H1 (cell line): ENCODE measurements at regions of chr12 and their contacts with region 1.

Region 1: GRCh38 chr12:6752921-6753771 is at the start of gene MLF2:
- DNase-seq: peak; percentile 96 to 100
- H3K4me3 ChIP-seq: peak within 1 kb of the TSS; percentile 72 to 91 (median 88)
- H3K27ac ChIP-seq: peak within 1 kb of the TSS; percentile 94
- H3K4me1 ChIP-seq: peaks cover 0 to 4% (median 3%) of the 10 kb centered on the region in 4 experiments; a peak in 5 of 7 replicates
- H3K27me3 ChIP-seq: no peaks in the 10 kb centered on the region
- CTCF ChIP-seq: peak in 1 of 3 experiments; percentile 85; a peak in 1 of 4 replicates
- EP300 ChIP-seq: no peak
- POLR2A ChIP-seq: peak; percentile 61 to 71
- RAD21 ChIP-seq: no peak
- total RNA-seq, gene MLF2: 229 and 232 TPM in 2 replicates

Region 2: DNA sequence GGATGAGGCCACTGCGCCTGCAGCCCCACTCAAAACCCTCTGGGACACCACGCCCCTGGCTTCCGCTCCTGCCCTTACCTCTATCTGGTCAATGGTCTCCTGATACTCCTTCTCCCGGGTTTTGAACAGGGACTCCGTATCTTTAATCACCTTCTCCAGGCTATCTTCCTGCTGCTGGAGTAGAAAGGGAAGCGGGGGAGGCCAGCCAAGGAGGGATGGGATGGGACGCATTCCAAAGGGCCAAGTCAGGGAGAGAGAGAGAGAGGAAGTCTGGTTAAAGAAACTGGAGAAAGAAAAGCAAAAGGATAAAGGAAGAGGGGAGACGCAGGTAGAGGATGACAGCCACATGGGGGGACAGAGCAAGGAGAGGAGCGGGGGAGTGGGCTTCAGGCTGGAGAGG is 205.2 kb before region 1 on chr12:
- CTCF ChIA-PET with region 1: no interaction called
- POLR2A ChIA-PET with region 1: no interaction called
- DNase-seq: no peak
- H3K4me3 ChIP-seq: no peak overlapping the region
- H3K27ac ChIP-seq: no peak overlapping the region
- H3K4me1 ChIP-seq: peaks cover 0 to 4% (median 3%) of the 10 kb centered on the region in 4 experiments; a peak in 4 of 7 replicates
- H3K27me3 ChIP-seq: no peaks in the 10 kb centered on the region
- CTCF ChIP-seq: no peak
- EP300 ChIP-seq: no peak
- POLR2A ChIP-seq: no peak
- RAD21 ChIP-seq: no peak

Region 3: GRCh38 chr12:6723607-6724396 is 29.3 kb before region 1 on chr12 and contains the start of gene COPS7A:
- CTCF ChIA-PET with region 1: interaction called, 13 read pairs
- POLR2A ChIA-PET with region 1: interaction called, 25 read pairs
- DNase-seq: peak; percentile 95 to 98
- H3K4me3 ChIP-seq: peak within 1 kb of the TSS; percentile 58 to 91 (median 78)
- H3K27ac ChIP-seq: no peak within 1 kb of the TSS; the same call in 1 of the 2 replicates
- H3K4me1 ChIP-seq: peaks cover 0 to 2% (median under 1%) of the 10 kb centered on the region in 4 experiments; a peak in 3 of 7 replicates
- H3K27me3 ChIP-seq: no peaks in the 10 kb centered on the region; a peak in 2 of 7 replicates
- CTCF ChIP-seq: peak in 1 of 3 experiments; percentile 24; a peak in 1 of 4 replicates
- EP300 ChIP-seq: peak; percentile 21 to 63; a peak in 1 of 3 replicates
- POLR2A ChIP-seq: peak in 1 of 2 experiments; percentile 54; a peak in 2 of 3 replicates
- RAD21 ChIP-seq: 0 out of 4 replicates have a peak, but pooled peaks of 1 of the 2 experiments have one; percentile 2
- total RNA-seq, gene COPS7A: 43.3 and 44.5 TPM in 2 replicates

Region 4: GRCh38 chr12:6742834-6743233 is 10.3 kb before region 1 on chr12:
- CTCF ChIA-PET with region 1: interaction called, 22 read pairs
- POLR2A ChIA-PET with region 1: interaction called, 10 read pairs
- DNase-seq: no peak
- H3K4me3 ChIP-seq: no peak overlapping the region
- H3K27ac ChIP-seq: no peak overlapping the region
- H3K4me1 ChIP-seq: no peaks in the 10 kb centered on the region
- H3K27me3 ChIP-seq: no peaks in the 10 kb centered on the region
- CTCF ChIP-seq: no peak
- EP300 ChIP-seq: no peak
- POLR2A ChIP-seq: no peak
- RAD21 ChIP-seq: no peak

Region 5: GRCh38 chr12:6792522-6793201 is 39.5 kb after region 1 on chr12:
- CTCF ChIA-PET with region 1: interaction called, 15 read pairs
- POLR2A ChIA-PET with region 1: no interaction called
- DNase-seq: no peak
- H3K4me3 ChIP-seq: no peak overlapping the region
- H3K27ac ChIP-seq: no peak overlapping the region
- H3K4me1 ChIP-seq: peaks cover 0 to 9% (median under 1%) of the 10 kb centered on the region in 4 experiments; a peak in 3 of 7 replicates
- H3K27me3 ChIP-seq: 0 out of 7 replicates have a peak, but pooled peaks cover 0 to 3% (median 0%) of the 10 kb centered on the region in 4 experiments
- CTCF ChIP-seq: no peak
- EP300 ChIP-seq: no peak
- POLR2A ChIP-seq: no peak
- RAD21 ChIP-seq: no peak

Region 6: GRCh38 chr12:6839482-6840201 is 86.5 kb after region 1 on chr12:
- CTCF ChIA-PET with region 1: interaction called, 296 read pairs
- POLR2A ChIA-PET with region 1: interaction called, 25 read pairs
- DNase-seq: no peak
- H3K4me3 ChIP-seq: no peak overlapping the region
- H3K27ac ChIP-seq: no peak overlapping the region
- H3K4me1 ChIP-seq: peaks cover 0 to 3% (median 2%) of the 10 kb centered on the region in 4 experiments; a peak in 1 of 7 replicates
- H3K27me3 ChIP-seq: no peaks in the 10 kb centered on the region
- CTCF ChIP-seq: no peak
- EP300 ChIP-seq: no peak
- POLR2A ChIP-seq: no peak
- RAD21 ChIP-seq: no peak